CD8-positive, alpha-beta T cell (primary cell): ENCODE measurements at regions of chr20 and their contacts with region 1.

Region 1: GRCh38 chr20:56422076-56422823 is 10.2 kb downstream of the CASS4 start:
- DNase-seq: peak in 1 of 9 experiments; percentile 34
- ATAC-seq: no peak
- H3K4me3 ChIP-seq: no peak overlapping the region
- H3K4me3 Mint-ChIP-seq: peak overlapping the region; percentile 46
- H3K27ac ChIP-seq: no peak overlapping the region
- H3K27ac Mint-ChIP-seq: peak overlapping the region; percentile 56
- H3K4me1 ChIP-seq: peaks cover 58% of the 10 kb centered on the region
- H3K4me1 Mint-ChIP-seq: peaks cover 63% of the 10 kb centered on the region
- H3K27me3 ChIP-seq: no peaks in the 10 kb centered on the region
- H3K27me3 Mint-ChIP-seq: no peaks in the 10 kb centered on the region
- CTCF ChIP-seq: no peak

Region 2: GRCh38 chr20:56439771-56440291 is 17.6 kb after region 1 on chr20:
- CTCF ChIA-PET with region 1: interaction called, 3 read pairs
- POLR2A ChIA-PET with region 1: interaction called, 7 read pairs
- intact Hi-C with region 1: loop called in 1 of 2 experiments (anchors 2 kb)
- DNase-seq: peak in 3 of 9 experiments; percentile 23 to 54 (median 48)
- ATAC-seq: peak; percentile 43
- H3K4me3 ChIP-seq: no peak overlapping the region
- H3K4me3 Mint-ChIP-seq: peak overlapping the region; percentile 60
- H3K27ac ChIP-seq: peak overlapping the region; percentile 16 to 39
- H3K27ac Mint-ChIP-seq: peak overlapping the region; percentile 83
- H3K4me1 ChIP-seq: peaks cover 52% of the 10 kb centered on the region
- H3K4me1 Mint-ChIP-seq: peaks cover 61% of the 10 kb centered on the region
- H3K27me3 ChIP-seq: no peaks in the 10 kb centered on the region
- H3K27me3 Mint-ChIP-seq: no peaks in the 10 kb centered on the region
- CTCF ChIP-seq: no peak